CD4-positive, alpha-beta T cell (primary cell): ENCODE measurements at regions of chr5 and their contacts with region 1.

Region 1: DNA sequence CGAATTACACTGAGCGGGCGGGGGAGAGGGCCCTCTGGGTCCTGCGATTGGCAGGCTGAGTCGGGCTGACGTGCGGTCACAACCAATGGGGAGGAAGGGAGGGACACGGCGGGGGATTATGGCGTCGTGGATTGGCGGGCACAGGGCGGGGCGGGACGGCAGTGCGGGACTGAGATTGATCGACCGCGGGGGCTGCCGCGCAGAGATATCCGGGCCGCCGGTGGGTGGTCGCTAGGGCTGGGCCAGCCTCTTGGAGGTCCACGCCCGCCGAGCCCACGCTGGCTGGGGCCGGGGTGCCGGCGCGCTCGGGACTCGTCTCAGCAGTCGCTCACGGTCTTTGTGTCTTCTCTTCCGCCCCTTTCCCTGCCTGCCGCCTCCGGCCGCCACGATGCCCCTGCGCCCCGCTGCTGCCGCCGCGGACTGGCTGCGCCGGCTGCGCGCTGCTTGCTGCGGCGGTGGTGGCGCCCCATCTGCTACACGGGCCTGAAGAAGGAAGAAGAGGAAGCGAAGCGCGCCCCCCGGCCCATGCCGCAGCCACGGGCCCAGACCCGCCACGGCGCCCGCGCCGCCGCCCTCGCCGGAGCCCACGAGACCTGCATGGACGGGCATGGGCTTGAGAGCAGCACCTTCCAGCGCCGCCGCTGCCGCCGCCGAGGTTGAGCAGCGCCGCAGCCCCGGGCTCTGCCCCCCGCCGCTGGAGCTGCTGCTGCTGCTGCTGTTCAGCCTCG is at the start of gene RGMB:
- DNase-seq: peak; percentile 79 to 94 (median 88)
- ATAC-seq: peak; percentile 85
- H3K4me3 ChIP-seq: peak within 1 kb of the TSS; percentile 74
- H3K4me3 Mint-ChIP-seq: peak within 1 kb of the TSS; percentile 99
- H3K27ac ChIP-seq: peak within 1 kb of the TSS; percentile 10 to 61
- H3K27ac Mint-ChIP-seq: peak within 1 kb of the TSS; percentile 87
- H3K4me1 ChIP-seq: peaks cover 45% of the 10 kb centered on the region
- H3K4me1 Mint-ChIP-seq: peaks cover 72% of the 10 kb centered on the region
- H3K27me3 ChIP-seq: peaks cover 0 to 12% of the 10 kb centered on the region in 2 experiments
- H3K27me3 Mint-ChIP-seq: peaks cover 14% of the 10 kb centered on the region
- CTCF ChIP-seq: no peak
- total RNA-seq, gene RGMB: 15.8 to 15.9 TPM

Region 2: DNA sequence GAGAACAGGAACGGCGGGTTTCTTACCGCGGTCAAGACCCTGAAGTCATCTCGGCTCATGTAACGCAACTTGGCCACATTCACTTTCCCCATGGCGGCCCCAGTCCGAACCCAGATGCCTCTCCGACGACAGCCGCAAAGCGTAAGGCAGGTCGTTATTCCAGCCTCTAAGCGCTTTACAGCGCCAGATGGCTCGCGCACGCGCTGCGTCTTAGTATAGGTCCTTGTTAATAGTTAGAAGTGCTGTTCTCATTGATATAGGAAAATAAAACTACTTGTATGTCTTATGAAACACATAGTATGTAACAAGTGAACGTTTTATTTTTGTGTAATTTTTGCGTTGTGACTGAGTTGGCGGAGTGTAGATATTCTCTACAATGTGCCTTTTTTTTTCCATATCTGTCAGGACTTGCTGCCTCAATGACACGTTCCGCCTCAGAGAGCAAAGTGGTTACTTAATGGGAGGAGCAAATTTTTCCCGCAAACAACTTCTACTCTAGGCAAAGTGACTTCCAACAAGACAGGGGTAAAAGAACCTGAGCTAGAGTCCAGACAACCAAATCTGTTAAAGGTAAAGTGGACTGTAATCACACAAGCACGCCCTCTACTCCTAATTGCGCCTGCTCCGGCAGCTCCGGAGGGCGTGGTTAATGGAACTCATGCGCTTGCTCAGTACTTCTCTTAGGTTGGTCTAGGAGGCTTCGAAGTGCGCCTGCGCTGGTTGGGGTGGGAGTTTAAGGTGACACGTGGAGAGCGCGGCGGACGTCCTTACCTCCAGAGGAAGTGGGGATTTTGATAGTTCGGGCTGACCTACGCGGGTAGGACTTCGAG is 1590.3 kb before region 1 on chr5 and contains the start of gene RIOK2:
- CTCF ChIA-PET with region 1: interaction called, 4 read pairs
- POLR2A ChIA-PET with region 1: interaction called, 5 read pairs
- intact Hi-C with region 1: loop called (anchors 2 to 5 kb)
- DNase-seq: peak; percentile 81 to 96 (median 90)
- ATAC-seq: peak; percentile 91
- H3K4me3 ChIP-seq: peak within 1 kb of the TSS; percentile 73
- H3K4me3 Mint-ChIP-seq: peak within 1 kb of the TSS; percentile 97
- H3K27ac ChIP-seq: peak within 1 kb of the TSS; percentile 90 to 96
- H3K27ac Mint-ChIP-seq: peak within 1 kb of the TSS; percentile 98
- H3K4me1 ChIP-seq: peaks cover 11% of the 10 kb centered on the region
- H3K4me1 Mint-ChIP-seq: peaks cover 44% of the 10 kb centered on the region
- H3K27me3 ChIP-seq: no peaks in the 10 kb centered on the region
- H3K27me3 Mint-ChIP-seq: no peaks in the 10 kb centered on the region
- CTCF ChIP-seq: no peak
- total RNA-seq, gene RIOK2: 25.1 to 26.0 TPM

Region 3: DNA sequence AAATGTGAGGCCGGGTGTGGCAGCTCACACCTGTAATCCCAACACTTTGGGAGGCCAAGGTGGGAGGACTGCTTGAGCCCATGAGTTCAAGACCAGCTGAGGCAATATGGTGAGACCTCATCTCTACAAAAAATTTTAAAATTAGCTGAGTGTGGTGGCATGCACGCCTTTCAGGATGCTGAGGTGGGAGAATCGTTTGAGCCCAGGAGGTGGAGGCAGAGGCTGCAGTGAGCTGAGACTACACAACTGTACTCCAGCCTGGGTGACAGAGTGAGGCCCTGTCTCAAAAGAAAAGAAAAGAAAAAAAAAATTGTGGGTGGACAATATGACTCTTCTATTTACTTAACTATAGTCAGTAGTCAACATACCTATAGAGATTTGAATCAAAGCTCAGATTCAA is 150.3 kb after region 1 on chr5:
- CTCF ChIA-PET with region 1: no interaction called
- POLR2A ChIA-PET with region 1: interaction called, 17 read pairs
- intact Hi-C with region 1: loop called (anchors 5 kb)
- DNase-seq: peak in 1 of 14 experiments; percentile 30
- ATAC-seq: no peak
- H3K4me3 ChIP-seq: no peak overlapping the region
- H3K4me3 Mint-ChIP-seq: peak overlapping the region; percentile 48
- H3K27ac ChIP-seq: no peak overlapping the region
- H3K27ac Mint-ChIP-seq: peak overlapping the region; percentile 48
- H3K4me1 ChIP-seq: peaks cover 34% of the 10 kb centered on the region
- H3K4me1 Mint-ChIP-seq: peaks cover 75% of the 10 kb centered on the region
- H3K27me3 ChIP-seq: no peaks in the 10 kb centered on the region
- H3K27me3 Mint-ChIP-seq: no peaks in the 10 kb centered on the region
- CTCF ChIP-seq: no peak